GM18951 (cell line): ENCODE measurements at regions of chr3 and their contacts with region 1.

Region 1: DNA sequence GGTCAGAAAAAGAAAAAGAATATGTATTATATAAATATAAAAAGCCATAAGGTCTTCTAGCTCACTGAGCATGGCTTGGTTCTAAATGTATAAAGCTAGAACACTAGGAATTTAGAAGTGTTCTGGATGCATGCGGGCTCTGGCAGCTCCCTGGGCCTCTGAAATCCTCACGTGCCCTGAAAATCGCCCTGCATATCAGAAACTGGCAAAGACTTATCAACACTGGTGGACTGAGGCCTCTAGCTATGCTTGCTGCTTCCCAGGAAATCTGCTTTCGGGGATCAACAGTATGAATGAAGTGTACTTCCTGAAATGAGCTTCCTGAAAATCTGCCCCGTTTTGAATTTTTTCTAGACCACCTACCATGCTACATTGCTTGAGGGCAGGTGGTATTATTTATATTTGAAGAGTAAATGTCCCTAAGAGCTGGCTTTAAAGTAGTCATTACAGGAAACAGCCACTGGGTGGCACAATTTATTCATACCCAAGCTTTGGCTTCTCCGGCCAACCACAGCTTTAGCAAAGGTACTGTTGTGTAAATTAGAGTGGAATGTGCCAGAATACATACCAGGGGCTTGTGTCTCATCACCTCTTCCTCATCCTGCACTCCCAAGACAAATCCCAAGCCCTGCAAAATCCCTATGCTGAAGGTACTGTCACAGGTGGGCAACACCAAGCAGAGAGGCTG is 17.7 kb downstream of the CRTAP start:
- POLR2A ChIP-seq: no peak

Region 2: DNA sequence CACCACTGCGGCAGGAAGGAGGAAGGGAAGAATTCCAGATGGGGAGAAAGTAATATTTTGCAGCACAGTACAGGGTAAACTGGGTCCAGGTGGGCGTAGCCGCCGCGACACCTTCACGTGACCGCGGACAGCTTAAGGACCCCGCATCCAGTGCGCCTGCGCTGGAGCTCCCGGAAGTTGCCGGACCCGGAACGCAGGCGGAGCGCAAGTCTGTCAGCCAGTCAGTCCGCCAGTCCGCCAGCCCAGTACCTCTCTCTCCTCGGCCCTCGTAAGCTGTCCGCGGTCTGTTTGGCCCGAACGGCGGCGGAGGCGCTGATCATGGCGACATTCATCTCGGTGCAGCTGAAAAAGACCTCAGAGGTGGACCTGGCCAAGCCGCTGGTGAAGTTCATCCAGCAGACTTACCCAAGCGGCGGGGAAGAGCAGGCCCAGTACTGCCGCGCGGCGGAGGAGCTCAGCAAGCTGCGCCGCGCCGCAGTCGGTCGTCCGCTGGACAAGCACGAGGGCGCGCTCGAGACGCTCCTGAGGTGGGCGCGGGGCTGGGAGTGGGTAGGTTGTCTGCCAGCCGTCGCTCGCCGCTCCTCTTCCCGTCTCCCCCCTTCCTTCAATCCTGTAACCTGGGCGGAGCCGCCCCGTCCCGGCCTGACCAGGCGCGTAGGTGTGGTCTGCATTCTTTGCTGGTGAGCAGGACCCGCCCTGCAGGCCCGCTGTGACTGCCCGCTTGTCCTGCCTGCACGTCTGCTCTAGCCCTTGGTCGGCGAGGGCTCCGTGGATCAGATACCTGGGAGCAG is 667.1 kb after region 1 on chr3 and contains the start of gene PDCD6IP:
- in situ Hi-C with region 1: loop called (anchors 25 kb)
- POLR2A ChIP-seq: peak; percentile 97